Sciatic nerve (tissue), 2 donors: ENCODE measurements at regions of chr2 and their contacts with region 1.

Region 1: GRCh38 chr2:184444217-184444616 is 154.1 kb upstream of the ZNF804A start:
- DNase-seq: no peak
- ATAC-seq: no peak

Region 2: GRCh38 chr2:184498926-184499325 is 54.7 kb after region 1 on chr2:
- intact Hi-C with region 1: loop called (anchors 10 kb)
- DNase-seq: no peak
- ATAC-seq: no peak